ENCODE measurements at regions of chr12 and their contacts with region 1.

Region 1: DNA sequence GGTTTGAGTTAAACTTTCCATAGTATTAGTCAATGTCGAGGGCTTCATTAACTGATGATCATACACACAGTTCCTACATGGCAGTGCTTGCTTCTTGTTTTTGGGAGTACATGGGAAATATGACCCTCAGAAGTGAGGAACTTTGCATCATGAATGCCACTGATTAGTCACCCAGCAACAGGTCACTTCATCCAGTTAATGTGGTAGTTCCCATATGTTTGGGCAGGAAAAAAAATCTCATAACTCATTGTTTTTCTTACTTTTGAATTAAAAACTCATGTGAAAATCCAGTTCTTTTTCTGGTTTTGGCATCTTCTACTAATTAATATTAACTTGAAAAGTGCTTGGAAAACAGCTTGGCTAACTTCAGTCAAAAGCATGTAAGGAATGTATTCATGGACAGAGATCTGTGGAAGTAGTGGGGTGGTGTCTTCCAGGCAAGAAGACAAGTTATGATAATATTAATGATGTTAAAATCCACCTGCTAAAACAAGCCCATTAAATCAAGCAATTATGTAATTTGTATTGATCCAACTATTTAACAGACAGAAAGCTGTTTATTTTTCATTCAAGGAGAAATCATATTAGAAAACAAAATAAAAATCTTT is 309.1 kb upstream of the NAV3 start:
- DNase-seq: no peak
- ATAC-seq: no peak
- H3K4me3 ChIP-seq: no peak overlapping the region
- H3K27ac ChIP-seq: no peak overlapping the region
- H3K4me1 ChIP-seq: no peaks in the 10 kb centered on the region
- H3K27me3 ChIP-seq: no peaks in the 10 kb centered on the region
- CTCF ChIP-seq: no peak

Region 2: DNA sequence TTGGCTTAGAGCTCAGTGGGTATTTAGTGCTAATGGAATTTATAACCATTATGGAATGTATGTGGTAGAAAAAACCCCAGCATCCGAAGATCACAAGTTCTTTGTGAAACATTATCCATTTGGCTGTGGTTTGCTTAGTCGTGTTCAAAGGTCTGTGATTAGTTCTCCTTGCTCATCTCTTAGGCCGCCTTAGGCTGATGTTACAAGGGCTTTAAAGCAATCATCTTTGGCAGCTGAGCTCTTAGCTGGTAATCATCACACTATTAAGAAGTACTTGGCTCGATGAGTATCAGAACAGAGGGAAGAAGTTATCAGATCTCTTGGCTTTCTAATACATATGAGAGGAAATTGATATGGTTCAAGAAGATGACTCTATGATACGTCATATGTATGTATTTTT is 332.2 kb before region 1 on chr12:
- intact Hi-C with region 1: loop called in 1 of 2 experiments (anchors 10 kb)
- DNase-seq: no peak
- ATAC-seq: no peak
- H3K4me3 ChIP-seq: no peak overlapping the region
- H3K27ac ChIP-seq: no peak overlapping the region
- H3K4me1 ChIP-seq: no peaks in the 10 kb centered on the region
- H3K27me3 ChIP-seq: no peaks in the 10 kb centered on the region
- CTCF ChIP-seq: no peak

Measured in left lung (tissue), 14 donors.